ENCODE measurements at regions of chr4 and their contacts with region 1.

Region 1: GRCh38 chr4:48356355-48356754 is 15.0 kb downstream of the SLAIN2 start:
- DNase-seq: no peak
- ATAC-seq: no peak

Region 2: DNA sequence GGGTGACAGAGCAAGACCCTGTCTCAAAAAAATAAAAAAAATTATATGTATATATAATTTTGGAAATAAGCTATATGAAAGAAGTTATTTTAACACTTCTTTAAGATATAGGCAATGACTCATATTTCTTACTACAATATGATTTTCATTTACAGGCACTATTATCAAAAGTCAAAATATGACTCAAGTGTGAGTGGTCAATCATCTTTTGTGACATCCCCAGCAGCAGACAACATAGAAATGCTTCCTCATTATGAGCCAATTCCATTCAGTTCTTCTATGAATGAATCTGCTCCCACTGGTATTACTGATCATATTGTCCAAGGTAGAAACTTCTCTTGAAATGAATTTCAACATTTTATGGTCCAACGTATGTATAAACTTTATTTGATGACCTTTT is 495.3 kb after region 1 on chr4:
- intact Hi-C with region 1: loop called (anchors 5 kb)
- DNase-seq: no peak
- ATAC-seq: no peak

Measured in sciatic nerve (tissue), 2 donors.